GM12878 (cell line): ENCODE measurements at regions of chr7 and their contacts with region 1.

Region 1: GRCh38 chr7:41711283-41712064 is 8.6 kb upstream of the INHBA start:
- DNase-seq: no peak
- ATAC-seq: peak; percentile 53
- H3K4me3 ChIP-seq: no peak overlapping the region
- H3K27ac ChIP-seq: no peak overlapping the region
- H3K4me1 ChIP-seq: no peaks in the 10 kb centered on the region; the same call in 1 of the 2 replicates
- H3K27me3 ChIP-seq: no peaks in the 10 kb centered on the region
- CTCF ChIP-seq: peak in 2 of 3 experiments; percentile 25 to 33; a peak in 4 of 6 replicates
- EP300 ChIP-seq: no peak
- POLR2A ChIP-seq: no peak
- RAD21 ChIP-seq: peak; percentile 23; the same call in 1 of the 2 replicates

Region 2: DNA sequence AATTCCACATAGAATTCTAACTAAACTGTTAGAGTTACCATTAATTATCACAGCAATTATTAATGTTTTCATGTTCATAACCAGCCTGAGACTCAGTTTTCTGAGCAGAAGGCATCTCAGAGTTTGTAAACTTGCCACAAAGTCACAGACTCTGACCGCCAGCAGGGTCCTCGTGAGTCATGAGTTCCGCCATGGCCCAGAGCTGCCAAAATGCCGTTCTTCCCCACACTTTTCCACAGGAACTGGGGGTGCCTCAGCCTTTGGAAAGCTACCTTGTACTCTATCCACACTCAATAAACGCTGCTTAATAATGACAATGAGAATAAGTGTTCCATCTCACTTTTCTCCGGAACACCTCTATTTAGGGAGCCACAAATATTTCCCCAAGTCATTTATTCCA is 13.5 kb after region 1 on chr7:
- CTCF ChIA-PET with region 1: interaction called, 17 read pairs
- POLR2A ChIA-PET with region 1: no interaction called
- RAD21 ChIA-PET with region 1: interaction called, 5 read pairs
- SMC1A ChIA-PET with region 1: interaction called, 8 read pairs
- in situ Hi-C with region 1: no loop called
- intact Hi-C with region 1: no loop called
- DNase-seq: no peak
- ATAC-seq: no peak
- H3K4me3 ChIP-seq: no peak overlapping the region
- H3K27ac ChIP-seq: no peak overlapping the region
- H3K4me1 ChIP-seq: no peaks in the 10 kb centered on the region
- H3K27me3 ChIP-seq: no peaks in the 10 kb centered on the region; a peak in 1 of 4 replicates
- CTCF ChIP-seq: no peak
- EP300 ChIP-seq: no peak
- POLR2A ChIP-seq: no peak
- RAD21 ChIP-seq: no peak

Region 3: DNA sequence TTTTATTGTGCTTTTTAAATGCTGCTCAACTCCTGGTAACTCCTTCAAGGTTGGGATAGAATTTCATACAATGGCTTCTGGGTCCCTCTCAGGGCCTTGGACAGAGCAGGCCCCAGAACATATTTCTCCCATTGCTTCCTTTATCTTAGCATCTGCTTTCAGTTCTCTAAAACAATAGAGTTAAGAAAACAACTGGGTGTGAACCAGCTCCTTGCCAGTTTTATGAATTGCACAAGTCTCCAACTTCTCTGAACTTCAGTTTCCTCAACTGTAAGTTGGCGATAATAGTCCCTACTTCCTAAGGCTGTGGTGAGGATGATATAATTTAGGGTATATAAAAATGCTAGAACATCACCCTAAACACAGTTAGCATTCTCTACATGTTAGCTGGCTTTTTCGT is 68.4 kb after region 1 on chr7:
- CTCF ChIA-PET with region 1: no interaction called
- POLR2A ChIA-PET with region 1: no interaction called
- RAD21 ChIA-PET with region 1: no interaction called
- SMC1A ChIA-PET with region 1: interaction called, 3 read pairs
- in situ Hi-C with region 1: no loop called
- intact Hi-C with region 1: loop called (anchors 10 kb)
- DNase-seq: peak; percentile 4
- ATAC-seq: no peak
- H3K4me3 ChIP-seq: no peak overlapping the region
- H3K27ac ChIP-seq: no peak overlapping the region
- H3K4me1 ChIP-seq: no peaks in the 10 kb centered on the region
- H3K27me3 ChIP-seq: no peaks in the 10 kb centered on the region
- CTCF ChIP-seq: no peak
- EP300 ChIP-seq: no peak
- POLR2A ChIP-seq: no peak
- RAD21 ChIP-seq: no peak